ENCODE measurements at regions of chrX and their contacts with region 1.

Region 1: DNA sequence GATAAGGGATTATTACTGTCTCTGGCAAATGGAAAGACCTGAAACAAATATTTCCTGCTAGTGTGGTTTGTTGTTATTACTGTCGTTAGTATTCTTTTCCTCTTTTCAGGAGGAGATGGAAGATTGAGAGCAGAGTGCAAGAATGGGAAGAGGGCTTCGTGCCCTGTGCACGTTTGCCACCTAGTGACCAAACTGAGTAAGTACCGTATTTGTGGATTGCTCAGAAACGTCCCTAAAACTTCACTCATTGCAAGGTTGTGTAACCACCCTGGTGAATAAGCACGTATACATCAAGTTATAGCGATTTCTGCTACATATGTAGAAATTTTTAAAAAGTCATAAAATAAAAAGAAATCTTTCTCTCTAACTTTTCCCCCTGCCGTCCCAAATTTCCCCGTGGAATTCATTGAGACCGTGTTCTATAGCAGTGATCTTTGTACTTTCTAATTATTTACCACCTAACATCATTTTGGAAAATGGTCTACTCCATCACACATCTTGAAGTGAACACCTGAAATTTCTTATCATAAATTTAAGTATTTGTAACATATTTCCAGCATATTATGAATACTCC is 24.3 kb downstream of the LINC00632 start:
- DNase-seq: peak in 4 of 5 donors; percentile 14 to 19 (median 15)
- H3K4me3 ChIP-seq: no peak overlapping the region
- H3K4me3 Mint-ChIP-seq: no peak overlapping the region
- H3K27ac ChIP-seq: no peak overlapping the region
- H3K27ac Mint-ChIP-seq: no peak overlapping the region
- H3K4me1 ChIP-seq: no peaks in the 10 kb centered on the region
- H3K4me1 Mint-ChIP-seq: peaks cover 0 to 2% (median under 1%) of the 10 kb centered on the region in 4 donors
- H3K27me3 ChIP-seq: no peaks in the 10 kb centered on the region
- H3K27me3 Mint-ChIP-seq: no peaks in the 10 kb centered on the region

Region 2: DNA sequence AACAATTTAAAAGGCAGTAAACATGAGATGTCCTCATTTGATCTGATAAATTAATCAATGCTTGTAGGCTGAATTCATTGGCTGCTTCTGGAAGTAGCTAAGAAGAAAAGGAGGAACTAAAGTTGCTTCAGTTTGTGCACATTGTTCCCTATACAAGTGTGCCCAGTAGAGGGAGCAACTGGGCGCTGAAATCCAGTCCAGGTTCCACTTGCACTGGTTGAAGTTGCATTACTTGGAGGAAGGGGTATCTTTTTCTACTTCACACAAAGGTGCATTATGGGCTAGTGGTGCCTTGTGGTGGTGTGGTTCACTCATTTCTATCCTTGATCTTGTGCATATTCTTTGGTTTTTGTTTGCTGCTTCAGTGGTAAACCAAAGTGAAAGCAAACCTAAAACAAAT is 161.1 kb before region 1 on chrX:
- CTCF ChIA-PET with region 1: no interaction called
- POLR2A ChIA-PET with region 1: no interaction called
- intact Hi-C with region 1: loop called (anchors 5 kb)
- DNase-seq: peak in 1 of 5 donors; percentile 10
- H3K4me3 ChIP-seq: no peak overlapping the region
- H3K4me3 Mint-ChIP-seq: no peak overlapping the region
- H3K27ac ChIP-seq: no peak overlapping the region
- H3K27ac Mint-ChIP-seq: no peak overlapping the region
- H3K4me1 ChIP-seq: no peaks in the 10 kb centered on the region
- H3K4me1 Mint-ChIP-seq: peaks cover 0 to 2% (median 0%) of the 10 kb centered on the region in 4 donors
- H3K27me3 ChIP-seq: no peaks in the 10 kb centered on the region
- H3K27me3 Mint-ChIP-seq: no peaks in the 10 kb centered on the region

Region 3: DNA sequence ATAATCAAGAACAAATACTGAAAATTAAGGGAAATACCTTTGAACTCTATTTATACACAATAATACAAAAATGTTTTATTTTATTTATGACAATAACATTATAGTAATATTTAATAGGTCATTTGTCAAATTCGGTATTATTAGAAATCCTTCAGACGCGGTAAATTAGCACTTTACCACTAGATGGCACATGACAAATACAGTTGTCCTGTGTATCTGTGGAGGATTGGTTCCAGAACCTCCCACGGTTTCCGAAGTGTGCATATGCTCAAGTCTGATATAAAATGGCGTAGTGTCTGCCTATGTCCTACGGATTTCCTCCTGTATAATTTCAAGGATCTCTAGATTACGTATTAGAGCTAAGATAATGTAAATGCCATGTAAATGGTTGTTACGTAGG is 32.4 kb before region 1 on chrX:
- CTCF ChIA-PET with region 1: interaction called, 6 read pairs
- POLR2A ChIA-PET with region 1: no interaction called
- intact Hi-C with region 1: loop called (anchors 1 kb)
- DNase-seq: no peak
- H3K4me3 ChIP-seq: no peak overlapping the region
- H3K4me3 Mint-ChIP-seq: no peak overlapping the region
- H3K27ac ChIP-seq: no peak overlapping the region
- H3K27ac Mint-ChIP-seq: no peak overlapping the region
- H3K4me1 ChIP-seq: no peaks in the 10 kb centered on the region
- H3K4me1 Mint-ChIP-seq: peaks cover 0 to 1% (median under 1%) of the 10 kb centered on the region in 4 donors
- H3K27me3 ChIP-seq: no peaks in the 10 kb centered on the region
- H3K27me3 Mint-ChIP-seq: peaks cover 0 to 1% of the 10 kb centered on the region in 2 donors

Region 4: DNA sequence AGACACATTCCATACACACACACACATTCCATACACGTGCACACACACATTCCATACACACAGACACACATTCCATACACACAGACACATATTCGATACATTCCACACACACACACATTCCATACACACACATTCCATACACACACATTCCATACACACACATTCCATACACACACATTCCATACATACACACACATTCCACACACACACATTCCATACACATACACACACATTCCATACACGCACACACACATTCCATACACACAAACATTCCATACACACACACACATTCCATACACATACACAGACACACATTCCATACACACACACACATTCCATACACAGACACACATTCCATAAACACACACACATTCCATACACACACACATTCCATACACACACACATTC is 10.6 kb before region 1 on chrX:
- CTCF ChIA-PET with region 1: no interaction called
- POLR2A ChIA-PET with region 1: no interaction called
- intact Hi-C with region 1: no loop called
- DNase-seq: no peak
- H3K4me3 ChIP-seq: no peak overlapping the region
- H3K4me3 Mint-ChIP-seq: no peak overlapping the region
- H3K27ac ChIP-seq: no peak overlapping the region
- H3K27ac Mint-ChIP-seq: no peak overlapping the region
- H3K4me1 ChIP-seq: no peaks in the 10 kb centered on the region
- H3K4me1 Mint-ChIP-seq: no peaks in the 10 kb centered on the region
- H3K27me3 ChIP-seq: no peaks in the 10 kb centered on the region
- H3K27me3 Mint-ChIP-seq: no peaks in the 10 kb centered on the region